Activated CD4-positive, alpha-beta memory T cell treated with anti-CD3 and anti-CD28 coated beads, Interleukin-2, amount 10 ng/mL, durations not matched to agents 7 days and 5 days (primary cell): ENCODE measurements at regions of chr22 and their contacts with region 1.

Region 1: DNA sequence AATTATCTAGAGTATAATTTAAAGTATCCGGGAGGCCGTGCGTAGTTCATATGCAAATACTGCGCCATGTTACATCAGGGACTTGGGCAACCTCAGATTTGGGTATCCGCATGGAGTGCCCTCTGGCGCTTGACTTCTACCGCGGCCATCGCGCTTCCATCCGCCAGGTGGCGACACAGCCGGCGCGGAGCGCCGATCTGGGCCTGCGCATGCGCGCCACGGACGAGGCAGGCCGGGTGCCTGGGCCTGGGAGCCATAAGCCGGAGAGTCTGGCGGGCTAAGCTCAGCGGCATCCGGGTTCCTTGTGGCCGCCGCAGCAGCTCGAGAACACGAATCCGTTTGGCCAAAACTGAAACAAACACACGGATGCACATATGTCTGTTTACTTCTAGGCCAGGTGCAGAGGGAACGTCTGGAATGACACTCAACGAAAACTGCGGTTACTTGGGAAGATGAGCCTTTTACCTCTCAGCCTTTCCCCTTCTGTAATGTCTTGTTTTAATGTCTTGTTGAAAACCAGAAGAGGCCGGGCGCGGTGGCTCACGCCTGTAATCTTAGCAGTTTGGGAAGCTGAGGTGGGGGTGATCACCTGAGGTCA is 21.9 kb downstream of the SNU13 start:
- DNase-seq: peak; percentile 96
- H3K4me3 Mint-ChIP-seq: peak overlapping the region; percentile 86
- H3K27ac Mint-ChIP-seq: peak overlapping the region; percentile 98
- H3K4me1 Mint-ChIP-seq: peaks cover 21% of the 10 kb centered on the region
- H3K27me3 Mint-ChIP-seq: no peaks in the 10 kb centered on the region

Region 2: GRCh38 chr22:41650821-41651220 is 15.9 kb before region 1 on chr22:
- CTCF ChIA-PET with region 1: interaction called, 16 read pairs
- POLR2A ChIA-PET with region 1: interaction called, 11 read pairs
- DNase-seq: no peak
- H3K4me3 Mint-ChIP-seq: no peak overlapping the region
- H3K27ac Mint-ChIP-seq: no peak overlapping the region
- H3K4me1 Mint-ChIP-seq: peaks cover 13% of the 10 kb centered on the region
- H3K27me3 Mint-ChIP-seq: no peaks in the 10 kb centered on the region

Region 3: GRCh38 chr22:41682033-41682807 is 15.5 kb after region 1 on chr22:
- CTCF ChIA-PET with region 1: interaction called, 55 read pairs
- POLR2A ChIA-PET with region 1: interaction called, 76 read pairs
- DNase-seq: peak; percentile 88
- H3K4me3 Mint-ChIP-seq: peak overlapping the region; percentile 99
- H3K27ac Mint-ChIP-seq: peak overlapping the region; percentile 87
- H3K4me1 Mint-ChIP-seq: peaks cover 28% of the 10 kb centered on the region
- H3K27me3 Mint-ChIP-seq: no peaks in the 10 kb centered on the region

Region 4: GRCh38 chr22:41697126-41697775 is 30.5 kb after region 1 on chr22:
- CTCF ChIA-PET with region 1: interaction called, 30 read pairs
- POLR2A ChIA-PET with region 1: interaction called, 13 read pairs
- DNase-seq: peak; percentile 91
- H3K4me3 Mint-ChIP-seq: no peak overlapping the region
- H3K27ac Mint-ChIP-seq: peak overlapping the region; percentile 68
- H3K4me1 Mint-ChIP-seq: peaks cover 18% of the 10 kb centered on the region
- H3K27me3 Mint-ChIP-seq: peaks cover 4% of the 10 kb centered on the region

Region 5: DNA sequence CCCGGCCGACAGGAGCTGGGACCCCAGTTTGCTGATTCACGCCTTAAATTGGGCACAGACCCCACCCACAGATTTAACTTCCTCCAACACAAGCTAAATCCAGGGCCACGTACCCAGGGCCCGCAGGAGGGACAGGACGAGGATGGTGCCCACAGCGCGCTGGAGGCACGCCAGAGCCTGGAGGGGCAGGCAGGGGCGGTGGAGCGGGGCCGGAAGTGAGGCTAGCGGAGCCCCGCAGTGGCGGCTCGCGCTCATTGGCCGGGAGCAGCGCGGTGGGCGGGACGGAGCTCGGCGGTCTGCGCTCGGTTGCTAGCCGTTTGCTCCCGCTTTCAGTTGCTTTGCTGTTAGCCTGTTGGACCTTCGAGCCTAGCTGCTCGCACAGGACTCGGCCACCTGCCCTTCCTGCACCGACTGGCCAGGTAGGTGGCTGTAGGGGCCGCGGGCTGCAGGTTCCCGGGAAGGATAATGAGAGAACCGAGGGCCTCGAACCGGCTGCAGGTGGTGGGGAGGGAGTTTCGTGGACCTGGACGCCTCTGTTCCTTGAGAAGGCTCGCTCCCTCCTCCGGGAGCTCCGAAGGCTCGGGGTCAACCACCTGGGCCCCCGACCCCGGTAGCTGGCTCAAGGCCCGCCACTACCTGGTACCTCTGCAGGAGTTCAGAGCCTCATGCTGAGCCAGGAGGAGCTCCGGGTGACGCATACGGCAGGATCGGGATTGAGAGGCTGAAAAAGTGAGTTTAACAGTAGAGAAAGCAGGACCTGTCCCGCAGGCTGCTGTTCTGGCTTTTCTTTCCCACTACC is 133.8 kb after region 1 on chr22 and contains the start of gene CCDC134:
- CTCF ChIA-PET with region 1: interaction called, 24 read pairs
- POLR2A ChIA-PET with region 1: interaction called, 8 read pairs
- DNase-seq: peak; percentile 93
- H3K4me3 Mint-ChIP-seq: peak within 1 kb of the TSS; percentile 91
- H3K27ac Mint-ChIP-seq: peak within 1 kb of the TSS; percentile 90
- H3K4me1 Mint-ChIP-seq: peaks cover 44% of the 10 kb centered on the region
- H3K27me3 Mint-ChIP-seq: no peaks in the 10 kb centered on the region
- total RNA-seq, gene CCDC134: 17.9 to 20.3 TPM